ENCODE measurements at regions of chr4 and their contacts with region 1.

Region 1: DNA sequence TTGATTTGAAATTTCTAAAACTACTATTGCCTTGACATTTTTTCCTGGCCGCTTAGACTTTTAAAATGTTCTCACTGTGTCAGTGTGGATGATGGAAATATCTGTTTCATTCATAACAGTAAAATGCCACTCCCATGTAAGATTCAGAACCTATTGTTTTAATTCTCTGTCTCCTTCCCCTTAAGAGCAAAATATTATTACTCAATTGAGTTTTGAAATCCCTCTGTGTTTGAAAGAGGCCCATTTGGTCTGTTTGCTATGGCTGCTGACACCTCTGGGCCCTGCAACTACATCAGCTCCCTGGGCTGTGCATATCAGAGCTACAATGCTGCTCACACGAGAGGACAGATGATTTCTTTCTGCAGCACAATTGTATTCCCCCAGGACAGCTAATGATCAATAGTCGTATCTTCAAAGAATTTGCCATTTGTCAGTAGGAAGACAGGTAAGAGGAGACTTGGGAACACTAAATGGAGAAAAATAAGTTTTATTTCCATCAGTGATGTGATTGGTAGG is 388.0 kb upstream of the GALNT7 start:
- DNase-seq: no peak
- H3K4me3 ChIP-seq: no peak overlapping the region
- H3K27ac ChIP-seq: no peak overlapping the region
- H3K4me1 ChIP-seq: no peaks in the 10 kb centered on the region
- H3K27me3 ChIP-seq: no peaks in the 10 kb centered on the region
- CTCF ChIP-seq: no peak
- POLR2A ChIP-seq: no peak

Region 2: DNA sequence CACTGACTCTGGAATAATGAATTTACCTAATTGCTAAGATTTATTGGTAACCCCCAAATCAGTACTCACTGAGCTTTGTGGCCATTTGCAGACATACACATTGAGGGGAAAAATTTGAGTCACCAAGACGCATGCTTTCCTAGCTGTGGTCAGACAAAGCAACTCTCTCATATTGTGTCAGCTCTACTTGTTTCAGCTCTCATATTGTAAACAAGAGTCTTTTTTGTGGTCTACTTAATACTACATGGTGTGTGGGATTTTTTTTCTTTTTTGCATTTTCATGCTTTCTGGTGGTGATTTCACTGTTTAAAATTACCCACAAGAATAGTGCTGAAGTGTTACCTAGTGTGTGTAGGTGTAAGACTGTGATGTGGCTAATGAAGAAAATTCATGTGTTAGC is 40.2 kb before region 1 on chr4:
- intact Hi-C with region 1: no loop called
- DNase-seq: no peak
- H3K4me3 ChIP-seq: no peak overlapping the region
- H3K27ac ChIP-seq: no peak overlapping the region
- H3K4me1 ChIP-seq: no peaks in the 10 kb centered on the region
- H3K27me3 ChIP-seq: no peaks in the 10 kb centered on the region
- CTCF ChIP-seq: no peak
- POLR2A ChIP-seq: no peak

Region 3: GRCh38 chr4:172791841-172792240 is 11.2 kb after region 1 on chr4:
- intact Hi-C with region 1: loop called (anchors 1 kb)
- DNase-seq: no peak
- H3K4me3 ChIP-seq: no peak overlapping the region
- H3K27ac ChIP-seq: no peak overlapping the region
- H3K4me1 ChIP-seq: no peaks in the 10 kb centered on the region
- H3K27me3 ChIP-seq: no peaks in the 10 kb centered on the region
- CTCF ChIP-seq: no peak
- POLR2A ChIP-seq: no peak